Activated CD4-positive, alpha-beta memory T cell treated with anti-CD3 and anti-CD28 coated beads, Interleukin-2, amount 10 ng/mL, durations not matched to agents 7 days and 5 days (primary cell): ENCODE measurements at regions of chr11 and their contacts with region 1.

Region 1: DNA sequence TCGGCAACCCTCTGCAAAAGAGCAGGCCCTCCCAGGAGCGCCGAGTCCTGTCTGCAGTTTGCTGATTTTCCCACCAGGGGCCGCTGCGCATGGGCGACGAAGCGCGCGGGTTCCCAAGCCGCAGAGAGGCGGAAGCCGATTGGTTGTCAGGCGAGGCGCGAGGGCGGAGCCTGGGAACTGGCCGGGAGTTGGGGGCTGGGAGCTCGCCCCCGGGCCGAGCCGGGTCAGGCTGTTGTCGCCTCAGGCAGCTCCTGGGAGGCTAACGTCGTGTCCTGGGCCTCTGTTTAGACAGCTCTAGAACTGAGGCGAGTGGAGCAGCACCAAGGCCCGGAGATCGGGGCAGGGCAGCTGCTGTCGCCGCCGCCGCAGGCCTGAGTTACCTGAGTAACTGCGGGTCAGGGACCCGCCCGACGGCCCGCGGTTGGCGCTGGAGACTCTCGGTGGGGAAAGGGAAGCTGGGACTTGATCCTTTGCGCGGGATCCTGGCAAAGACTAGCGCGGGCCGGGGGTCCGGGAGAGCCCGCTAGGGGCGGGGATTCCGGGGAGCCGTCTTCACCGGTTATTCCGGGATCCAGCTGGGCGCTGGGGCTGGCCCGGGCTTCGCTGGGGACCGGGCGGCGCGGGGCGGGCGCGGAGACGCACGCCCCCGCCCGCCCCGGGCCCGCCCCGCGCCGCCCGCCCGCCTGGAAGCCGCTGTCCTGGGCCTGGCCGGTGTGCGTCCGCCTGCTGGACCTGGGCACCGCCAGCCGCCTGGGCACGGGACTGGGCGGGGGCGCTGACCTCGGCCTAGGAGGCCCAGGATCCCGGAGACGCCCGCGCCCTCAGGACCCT is at the start of gene STIM1:
- DNase-seq: peak; percentile 98
- H3K4me3 Mint-ChIP-seq: peak within 1 kb of the TSS; percentile 97
- H3K27ac Mint-ChIP-seq: peak within 1 kb of the TSS; percentile 100
- H3K4me1 Mint-ChIP-seq: peaks cover 56% of the 10 kb centered on the region
- H3K27me3 Mint-ChIP-seq: no peaks in the 10 kb centered on the region
- total RNA-seq, gene STIM1: 111 to 113 TPM

Region 2: DNA sequence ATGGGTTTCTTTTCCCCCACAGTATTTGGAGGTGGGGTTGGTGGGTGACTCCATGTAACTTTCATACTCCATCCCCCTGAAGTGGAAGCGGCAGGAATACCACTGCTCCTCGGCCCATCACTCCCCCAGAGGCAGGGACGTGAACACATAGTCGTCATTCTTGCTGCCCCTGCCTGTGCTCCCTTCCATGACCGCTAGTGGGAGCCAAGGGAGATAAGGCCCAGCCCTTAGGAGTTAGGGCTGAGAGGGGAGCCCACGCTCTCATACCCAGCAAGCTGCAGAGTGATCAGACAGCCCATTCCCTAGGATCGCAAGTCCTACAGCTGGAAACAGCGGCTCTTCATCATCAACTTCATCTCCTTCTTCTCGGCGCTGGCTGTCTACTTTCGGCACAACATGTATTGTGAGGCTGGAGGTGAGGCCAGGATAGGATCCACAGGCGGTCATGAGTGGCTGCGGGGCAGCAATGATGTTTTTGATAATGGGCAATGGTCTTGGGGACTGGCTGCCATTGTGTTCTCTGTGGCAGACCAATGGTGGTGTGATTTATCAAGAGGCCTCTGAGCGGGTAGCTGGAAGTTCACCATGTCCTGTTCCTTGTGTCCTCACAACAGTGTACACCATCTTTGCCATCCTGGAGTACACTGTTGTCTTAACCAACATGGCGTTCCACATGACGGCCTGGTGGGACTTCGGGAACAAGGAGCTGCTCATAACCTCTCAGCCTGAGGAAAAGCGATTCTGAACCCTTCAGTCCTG is 30.3 kb before region 1 on chr11:
- CTCF ChIA-PET with region 1: interaction called, 461 read pairs
- POLR2A ChIA-PET with region 1: interaction called, 10 read pairs
- DNase-seq: peak; percentile 82
- H3K4me3 Mint-ChIP-seq: no peak overlapping the region
- H3K27ac Mint-ChIP-seq: peak overlapping the region; percentile 56
- H3K4me1 Mint-ChIP-seq: peaks cover 30% of the 10 kb centered on the region
- H3K27me3 Mint-ChIP-seq: no peaks in the 10 kb centered on the region

Region 3: GRCh38 chr11:3894128-3894731 is 39.0 kb after region 1 on chr11:
- CTCF ChIA-PET with region 1: interaction called, 11 read pairs
- POLR2A ChIA-PET with region 1: interaction called, 5 read pairs
- DNase-seq: no peak
- H3K4me3 Mint-ChIP-seq: no peak overlapping the region
- H3K27ac Mint-ChIP-seq: no peak overlapping the region
- H3K4me1 Mint-ChIP-seq: peaks cover 25% of the 10 kb centered on the region
- H3K27me3 Mint-ChIP-seq: no peaks in the 10 kb centered on the region

Region 4: DNA sequence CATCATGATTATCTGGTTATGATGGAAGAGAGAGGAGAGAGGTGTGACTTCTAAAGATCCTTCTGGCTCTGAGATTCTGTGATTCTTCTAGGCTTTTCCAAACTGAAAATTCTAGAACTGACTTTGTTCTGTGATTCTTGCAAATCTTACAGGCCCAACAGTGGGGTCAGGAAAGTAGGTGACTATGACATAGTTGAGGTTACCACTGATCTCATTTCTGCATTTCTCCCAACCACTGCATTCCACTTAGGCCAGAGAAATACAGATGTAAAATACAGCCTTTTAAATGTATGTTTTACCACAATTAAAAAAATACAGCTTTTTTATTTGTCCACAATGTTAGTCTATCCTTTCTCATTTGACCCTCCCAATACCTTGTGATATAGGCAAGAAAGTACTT is 84.0 kb after region 1 on chr11:
- CTCF ChIA-PET with region 1: interaction called, 21 read pairs
- POLR2A ChIA-PET with region 1: interaction called, 129 read pairs
- DNase-seq: no peak
- H3K4me3 Mint-ChIP-seq: no peak overlapping the region
- H3K27ac Mint-ChIP-seq: no peak overlapping the region
- H3K4me1 Mint-ChIP-seq: peaks cover 70% of the 10 kb centered on the region
- H3K27me3 Mint-ChIP-seq: no peaks in the 10 kb centered on the region

Region 5: DNA sequence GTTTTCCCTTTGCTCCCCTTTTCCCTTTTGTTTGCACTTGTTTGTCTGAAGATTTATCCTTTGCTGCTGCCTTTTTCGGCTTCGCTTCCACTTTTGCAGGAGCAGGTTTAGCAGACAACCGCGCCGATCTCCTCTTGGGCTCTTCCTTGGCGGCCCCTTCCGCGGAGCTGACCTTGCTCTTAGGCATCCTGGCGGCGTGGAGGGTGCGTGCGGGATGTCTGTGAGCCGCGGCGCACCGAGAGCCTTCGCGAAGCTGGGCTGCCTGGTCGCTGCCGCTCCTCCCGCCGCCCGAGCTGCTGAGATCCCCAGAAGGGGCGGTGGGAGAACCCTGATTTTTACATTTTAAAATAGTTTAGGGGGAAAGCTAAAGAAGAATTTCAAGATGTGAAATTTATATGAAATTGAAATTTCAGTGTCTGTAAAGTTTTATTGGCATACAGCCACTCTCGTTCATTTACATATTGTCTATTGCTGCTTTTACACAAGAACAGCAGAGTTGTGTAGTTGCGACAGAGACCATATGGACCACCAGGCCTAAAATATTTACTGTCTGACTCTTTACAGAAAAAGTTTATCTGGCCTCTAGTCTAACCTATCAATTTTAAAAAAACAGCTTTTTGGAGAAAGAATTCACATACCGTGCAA is 134.2 kb after region 1 on chr11:
- CTCF ChIA-PET with region 1: interaction called, 12 read pairs
- POLR2A ChIA-PET with region 1: interaction called, 9 read pairs
- DNase-seq: no peak
- H3K4me3 Mint-ChIP-seq: no peak overlapping the region
- H3K27ac Mint-ChIP-seq: peak overlapping the region; percentile 1
- H3K4me1 Mint-ChIP-seq: peaks cover 52% of the 10 kb centered on the region
- H3K27me3 Mint-ChIP-seq: no peaks in the 10 kb centered on the region

Region 6: GRCh38 chr11:4072668-4073285 is 217.6 kb after region 1 on chr11:
- CTCF ChIA-PET with region 1: interaction called, 554 read pairs
- POLR2A ChIA-PET with region 1: interaction called, 108 read pairs
- DNase-seq: peak; percentile 51
- H3K4me3 Mint-ChIP-seq: no peak overlapping the region
- H3K27ac Mint-ChIP-seq: peak overlapping the region; percentile 5
- H3K4me1 Mint-ChIP-seq: peaks cover 33% of the 10 kb centered on the region
- H3K27me3 Mint-ChIP-seq: no peaks in the 10 kb centered on the region